ENCODE measurements at regions of chr20 and their contacts with region 1.

Region 1: GRCh38 chr20:1392823-1393506 is at the start of gene FKBP1A:
- DNase-seq: peak; percentile 80 to 92 (median 89)
- ATAC-seq: peak; percentile 96
- H3K4me3 ChIP-seq: peak within 1 kb of the TSS; percentile 74
- H3K4me3 Mint-ChIP-seq: peak within 1 kb of the TSS; percentile 79 to 98 (median 94)
- H3K27ac ChIP-seq: peak within 1 kb of the TSS; percentile 82
- H3K27ac Mint-ChIP-seq: peak within 1 kb of the TSS; percentile 91 to 99 (median 96)
- H3K4me1 ChIP-seq: peaks cover 39 to 44% of the 10 kb centered on the region in 2 donors
- H3K4me1 Mint-ChIP-seq: peaks cover 45 to 82% (median 75%) of the 10 kb centered on the region in 7 donors
- H3K27me3 ChIP-seq: no peaks in the 10 kb centered on the region
- H3K27me3 Mint-ChIP-seq: peaks cover 0 to 30% (median 0%) of the 10 kb centered on the region in 5 donors
- total RNA-seq, gene FKBP1A: 74.5 to 253 (median 93.1) TPM

Region 2: DNA sequence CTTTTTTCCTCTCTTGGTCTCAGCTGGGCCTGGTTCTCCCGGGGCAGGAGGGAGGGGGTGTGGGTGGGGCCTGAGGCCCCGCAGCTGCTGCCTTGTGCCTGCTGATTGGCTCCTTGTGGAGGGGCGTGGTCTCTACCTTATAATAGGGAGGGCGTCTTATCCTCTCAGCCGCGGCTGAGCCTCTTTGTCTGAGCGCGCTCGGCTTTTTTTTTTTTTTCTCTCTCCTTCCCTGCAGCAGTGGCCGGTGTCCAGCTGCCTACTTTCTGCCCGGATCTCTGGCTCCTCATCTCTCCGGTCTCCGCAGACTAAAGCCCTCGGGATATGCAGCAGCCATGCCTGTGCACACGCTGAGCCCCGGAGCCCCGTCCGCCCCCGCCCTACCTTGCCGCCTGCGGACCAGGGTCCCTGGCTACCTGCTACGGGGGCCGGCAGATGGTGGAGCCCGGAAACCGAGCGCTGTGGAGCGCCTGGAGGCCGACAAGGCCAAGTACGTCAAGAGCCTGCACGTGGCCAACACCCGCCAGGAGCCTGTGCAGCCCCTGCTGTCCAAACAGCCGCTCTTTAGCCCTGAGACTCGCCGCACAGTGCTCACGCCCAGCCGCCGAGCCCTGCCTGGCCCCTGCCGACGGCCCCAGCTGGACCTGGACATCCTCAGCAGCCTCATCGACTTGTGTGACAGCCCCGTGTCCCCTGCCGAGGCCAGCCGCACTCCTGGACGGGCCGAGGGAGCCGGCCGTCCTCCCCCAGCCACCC is 548.3 kb before region 1 on chr20:
- CTCF ChIA-PET with region 1: no interaction called
- POLR2A ChIA-PET with region 1: no interaction called
- intact Hi-C with region 1: loop called in 1 of 2 experiments (anchors 1 kb)
- DNase-seq: peak; percentile 55 to 95 (median 83)
- ATAC-seq: peak; percentile 98
- H3K4me3 ChIP-seq: peak overlapping the region; percentile 75
- H3K4me3 Mint-ChIP-seq: peak overlapping the region; percentile 88 to 97 (median 94)
- H3K27ac ChIP-seq: peak overlapping the region; percentile 70
- H3K27ac Mint-ChIP-seq: peak overlapping the region in 8 of 9 donors; percentile 70 to 93 (median 86)
- H3K4me1 ChIP-seq: peaks cover 40 to 45% of the 10 kb centered on the region in 2 donors
- H3K4me1 Mint-ChIP-seq: peaks cover 30 to 58% (median 52%) of the 10 kb centered on the region in 7 donors
- H3K27me3 ChIP-seq: no peaks in the 10 kb centered on the region
- H3K27me3 Mint-ChIP-seq: no peaks in the 10 kb centered on the region

Region 3: DNA sequence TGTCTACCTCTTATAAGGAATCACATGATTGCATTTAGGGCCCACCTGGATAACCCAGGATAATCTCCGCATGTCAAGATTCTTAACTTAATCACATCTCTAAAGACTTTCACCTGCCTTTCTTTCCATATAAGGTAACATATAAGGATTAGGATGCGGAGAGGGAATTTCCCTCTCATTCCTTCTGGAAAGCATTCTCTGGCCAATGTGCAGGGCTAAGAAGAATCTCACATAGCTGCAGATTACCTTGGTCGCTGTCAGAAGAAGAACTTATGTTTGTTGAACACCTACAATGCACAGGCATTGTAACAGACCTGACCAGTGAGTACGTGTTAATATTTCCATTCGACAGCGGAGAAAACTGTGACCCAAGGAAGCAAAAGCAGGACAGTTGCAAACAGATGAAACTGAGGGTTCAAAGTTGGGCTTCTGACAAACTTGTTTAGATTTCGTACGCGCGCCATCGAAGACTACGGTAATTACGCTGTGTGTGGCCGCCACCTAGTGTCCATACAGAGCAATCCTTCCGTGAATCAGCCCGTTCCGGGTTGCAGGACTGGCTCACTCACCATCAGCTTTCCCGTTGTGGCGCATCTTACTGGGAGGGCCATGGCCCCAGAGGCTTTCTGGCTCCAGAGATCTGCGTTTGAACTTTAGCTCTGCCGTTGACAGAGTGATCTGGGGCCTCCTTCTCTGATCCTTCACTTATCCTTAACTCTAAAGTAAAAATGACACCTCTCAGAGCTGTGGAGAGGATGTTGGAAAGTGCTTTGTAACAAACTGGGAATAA is 180.2 kb before region 1 on chr20:
- CTCF ChIA-PET with region 1: no interaction called
- POLR2A ChIA-PET with region 1: no interaction called
- intact Hi-C with region 1: no loop called
- DNase-seq: peak; percentile 40 to 72 (median 60)
- ATAC-seq: peak; percentile 94
- H3K4me3 ChIP-seq: no peak overlapping the region
- H3K4me3 Mint-ChIP-seq: peak overlapping the region in 4 of 10 donors; percentile 9 to 41 (median 36)
- H3K27ac ChIP-seq: no peak overlapping the region
- H3K27ac Mint-ChIP-seq: peak overlapping the region in 5 of 9 donors; percentile 0 to 97 (median 37)
- H3K4me1 ChIP-seq: peaks cover 5 to 27% of the 10 kb centered on the region in 2 donors
- H3K4me1 Mint-ChIP-seq: peaks cover 21 to 51% (median 36%) of the 10 kb centered on the region in 7 donors
- H3K27me3 ChIP-seq: no peaks in the 10 kb centered on the region
- H3K27me3 Mint-ChIP-seq: peaks cover 0 to 16% (median 0%) of the 10 kb centered on the region in 5 donors

Region 4: DNA sequence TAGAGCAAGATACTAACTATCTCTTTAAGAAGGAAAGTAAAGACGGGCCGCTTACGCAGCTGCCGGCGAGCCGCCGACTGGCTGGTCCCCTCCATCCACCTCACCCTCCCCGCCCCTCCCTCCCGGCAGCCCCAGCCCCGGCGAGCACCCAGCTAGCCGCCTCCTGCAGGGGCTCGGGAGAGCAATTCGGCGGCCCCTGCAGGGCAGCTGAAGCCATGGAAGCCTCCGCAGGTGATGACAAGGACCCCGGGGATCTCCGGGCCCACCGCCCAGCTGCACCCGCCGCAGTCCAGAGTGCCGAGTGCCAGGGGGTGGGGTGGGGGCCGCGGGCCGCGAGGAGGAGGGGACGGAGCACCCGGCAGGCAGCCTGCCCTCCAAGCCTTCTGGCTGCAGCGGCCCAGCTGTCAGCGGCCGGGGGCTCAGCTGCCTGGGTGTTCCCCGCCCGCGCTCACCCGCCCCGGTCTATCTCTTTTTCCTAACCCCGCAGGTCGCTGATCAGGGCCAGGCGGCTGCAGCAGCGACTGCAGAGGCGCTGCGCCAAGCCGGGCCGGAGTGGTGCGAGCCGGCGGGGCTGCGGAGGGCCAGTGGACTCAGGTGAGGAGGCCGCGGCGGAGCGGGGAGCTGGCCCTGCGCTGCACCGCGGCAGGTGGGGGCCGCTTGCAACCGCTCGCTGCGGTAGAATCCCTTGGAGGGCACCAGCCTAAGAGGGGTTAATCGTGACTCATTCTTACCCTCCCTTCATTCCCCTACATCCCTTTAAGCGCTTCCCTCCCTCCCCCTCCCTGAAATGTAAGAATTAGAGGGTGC is 126.6 kb before region 1 on chr20 and contains the start of gene SNPH:
- CTCF ChIA-PET with region 1: interaction called, 3 read pairs
- POLR2A ChIA-PET with region 1: interaction called, 3 read pairs
- intact Hi-C with region 1: loop called in 1 of 2 experiments (anchors 1 kb)
- DNase-seq: peak; percentile 41 to 79 (median 67)
- ATAC-seq: peak; percentile 93
- H3K4me3 ChIP-seq: peak within 1 kb of the TSS; percentile 66
- H3K4me3 Mint-ChIP-seq: peak within 1 kb of the TSS; percentile 79 to 99 (median 93)
- H3K27ac ChIP-seq: peak within 1 kb of the TSS; percentile 88
- H3K27ac Mint-ChIP-seq: peak within 1 kb of the TSS; percentile 77 to 100 (median 98)
- H3K4me1 ChIP-seq: peaks cover 9 to 54% of the 10 kb centered on the region in 2 donors
- H3K4me1 Mint-ChIP-seq: peaks cover 22 to 87% (median 81%) of the 10 kb centered on the region in 7 donors
- H3K27me3 ChIP-seq: no peaks in the 10 kb centered on the region
- H3K27me3 Mint-ChIP-seq: peaks cover 0 to 5% (median 0%) of the 10 kb centered on the region in 5 donors
- total RNA-seq, gene SNPH: 7.3 to 43.4 (median 22.5) TPM

Region 5: DNA sequence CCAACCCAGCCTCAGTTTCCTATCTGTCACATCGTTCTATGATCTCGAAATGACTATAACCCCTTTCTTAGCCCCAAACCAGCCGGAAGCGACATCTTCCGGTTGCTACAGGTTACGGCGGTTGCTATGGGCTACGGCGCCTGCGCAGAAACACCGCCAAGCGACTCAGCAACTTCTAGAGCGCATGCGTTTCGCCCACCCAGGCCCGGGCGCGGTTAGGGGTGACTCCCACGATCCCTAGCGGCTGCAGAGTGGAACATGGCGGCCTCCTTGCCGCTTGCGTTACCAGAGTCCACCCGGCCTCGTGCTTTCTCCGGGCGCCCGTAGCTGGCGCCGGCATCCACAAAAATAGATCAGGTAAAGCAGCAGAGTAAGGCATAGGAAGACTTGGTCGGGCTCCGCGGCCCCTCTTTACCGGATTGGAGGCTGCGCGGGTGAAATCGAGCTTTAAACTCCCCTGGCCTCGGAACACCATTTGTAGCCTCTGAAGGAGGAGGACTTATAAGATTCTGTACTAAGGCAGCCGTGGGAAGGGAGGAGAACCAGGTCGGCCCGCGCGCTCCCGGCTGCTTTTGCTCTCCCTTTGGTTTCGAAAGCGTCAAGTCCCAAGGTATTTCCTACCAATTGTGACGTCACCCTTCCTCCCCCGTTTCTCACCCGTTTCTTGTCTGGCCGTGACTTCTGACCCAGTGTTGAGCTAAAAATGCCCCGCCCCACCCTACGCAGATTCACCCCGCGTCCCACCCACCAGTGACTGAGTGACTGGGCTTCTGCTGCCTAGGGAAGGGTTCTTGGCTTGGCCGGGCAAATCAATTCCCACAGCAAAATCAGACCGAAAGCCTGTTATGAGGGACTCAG is 67.6 kb before region 1 on chr20:
- CTCF ChIA-PET with region 1: no interaction called
- POLR2A ChIA-PET with region 1: interaction called, 5 read pairs
- intact Hi-C with region 1: loop called (anchors 1 kb)
- DNase-seq: peak; percentile 96 to 99 (median 98)
- ATAC-seq: peak; percentile 92
- H3K4me3 ChIP-seq: peak overlapping the region; percentile 95
- H3K4me3 Mint-ChIP-seq: no peak overlapping the region
- H3K27ac ChIP-seq: peak overlapping the region; percentile 97
- H3K27ac Mint-ChIP-seq: no peak overlapping the region
- H3K4me1 ChIP-seq: peaks cover 18 to 25% of the 10 kb centered on the region in 2 donors
- H3K4me1 Mint-ChIP-seq: peaks cover 0 to 31% (median 14%) of the 10 kb centered on the region in 7 donors
- H3K27me3 ChIP-seq: no peaks in the 10 kb centered on the region
- H3K27me3 Mint-ChIP-seq: no peaks in the 10 kb centered on the region

Region 6: GRCh38 chr20:1357921-1358671 is 34.9 kb before region 1 on chr20:
- CTCF ChIA-PET with region 1: no interaction called
- POLR2A ChIA-PET with region 1: interaction called, 3 read pairs
- intact Hi-C with region 1: loop called in 1 of 2 experiments (anchors 2 kb)
- DNase-seq: peak in 1 of 9 donors; percentile 55
- ATAC-seq: no peak
- H3K4me3 ChIP-seq: no peak overlapping the region
- H3K4me3 Mint-ChIP-seq: peak overlapping the region; percentile 36 to 78 (median 48)
- H3K27ac ChIP-seq: no peak overlapping the region
- H3K27ac Mint-ChIP-seq: peak overlapping the region in 8 of 9 donors; percentile 51 to 80 (median 70)
- H3K4me1 ChIP-seq: peaks cover 0 to 10% of the 10 kb centered on the region in 2 donors
- H3K4me1 Mint-ChIP-seq: peaks cover 24 to 67% (median 55%) of the 10 kb centered on the region in 7 donors
- H3K27me3 ChIP-seq: no peaks in the 10 kb centered on the region
- H3K27me3 Mint-ChIP-seq: no peaks in the 10 kb centered on the region

Region 7: GRCh38 chr20:1437235-1437904 is 44.4 kb after region 1 on chr20:
- CTCF ChIA-PET with region 1: interaction called, 7 read pairs
- POLR2A ChIA-PET with region 1: interaction called, 5 read pairs
- intact Hi-C with region 1: loop called (anchors 1 kb)
- DNase-seq: peak; percentile 55 to 79 (median 72)
- ATAC-seq: peak; percentile 72
- H3K4me3 ChIP-seq: no peak overlapping the region
- H3K4me3 Mint-ChIP-seq: peak overlapping the region in 1 of 10 donors; percentile 35
- H3K27ac ChIP-seq: no peak overlapping the region
- H3K27ac Mint-ChIP-seq: peak overlapping the region in 3 of 9 donors; percentile 8 to 73 (median 16)
- H3K4me1 ChIP-seq: peaks cover 11 to 17% of the 10 kb centered on the region in 2 donors
- H3K4me1 Mint-ChIP-seq: peaks cover 25 to 53% (median 49%) of the 10 kb centered on the region in 7 donors
- H3K27me3 ChIP-seq: no peaks in the 10 kb centered on the region
- H3K27me3 Mint-ChIP-seq: peaks cover 0 to 19% (median 0%) of the 10 kb centered on the region in 5 donors

Measured in naive thymus-derived CD4-positive, alpha-beta T cell (primary cell).